Calu3 (cell line): ENCODE measurements at regions of chr17 and their contacts with region 1.

Region 1: GRCh38 chr17:42843358-42843934 is 934 bp upstream of the AOC2 start:
- DNase-seq: peak; percentile 61
- H3K4me3 Mint-ChIP-seq: no peak overlapping the region
- H3K27ac Mint-ChIP-seq: peak overlapping the region; percentile 15
- H3K4me1 Mint-ChIP-seq: peaks cover 8% of the 10 kb centered on the region
- H3K27me3 Mint-ChIP-seq: no peaks in the 10 kb centered on the region
- CTCF ChIP-seq: peak; percentile 78

Region 2: DNA sequence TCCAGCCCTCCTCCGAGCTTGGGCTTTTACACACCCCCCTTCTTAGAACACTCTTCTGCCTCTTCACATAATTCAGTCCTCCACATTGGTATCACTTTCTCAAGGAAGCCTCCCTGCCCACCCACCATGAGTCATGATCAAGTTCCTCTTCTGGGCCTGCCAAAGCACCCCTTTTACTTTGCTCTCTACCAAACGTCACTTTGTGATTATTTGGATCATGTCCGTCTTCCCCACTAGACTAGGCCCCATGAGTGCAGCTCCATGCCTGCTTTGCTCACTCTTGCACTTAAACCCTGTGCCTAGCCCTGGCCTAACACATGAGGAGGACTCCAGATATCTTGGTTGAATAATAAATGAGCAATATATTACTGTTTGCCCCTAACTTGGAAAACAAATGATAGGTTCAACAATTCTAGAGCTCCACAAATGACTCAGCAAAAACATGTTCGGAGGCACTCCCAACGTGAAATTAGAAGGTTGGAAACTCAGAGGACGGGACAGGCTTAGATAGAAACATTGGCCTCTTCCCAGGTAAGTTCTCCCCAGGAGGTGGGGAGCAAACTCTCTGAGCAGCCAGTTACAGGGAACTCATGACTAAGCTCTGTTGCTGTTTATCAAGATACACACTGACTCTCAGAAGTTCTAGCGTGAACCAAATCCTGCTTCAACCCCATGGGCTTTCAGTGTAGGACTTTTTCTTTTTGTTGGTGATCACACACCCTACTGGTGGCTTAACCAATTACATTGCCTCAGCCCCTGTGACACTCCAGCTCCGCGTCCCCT is 85.5 kb after region 1 on chr17:
- CTCF ChIA-PET with region 1: interaction called, 22 read pairs
- intact Hi-C with region 1: loop called (anchors 2 kb)
- DNase-seq: peak; percentile 62
- H3K4me3 Mint-ChIP-seq: no peak overlapping the region
- H3K27ac Mint-ChIP-seq: peak overlapping the region; percentile 24
- H3K4me1 Mint-ChIP-seq: peaks cover 10% of the 10 kb centered on the region
- H3K27me3 Mint-ChIP-seq: peaks cover 10% of the 10 kb centered on the region
- CTCF ChIP-seq: peak; percentile 72

Region 3: DNA sequence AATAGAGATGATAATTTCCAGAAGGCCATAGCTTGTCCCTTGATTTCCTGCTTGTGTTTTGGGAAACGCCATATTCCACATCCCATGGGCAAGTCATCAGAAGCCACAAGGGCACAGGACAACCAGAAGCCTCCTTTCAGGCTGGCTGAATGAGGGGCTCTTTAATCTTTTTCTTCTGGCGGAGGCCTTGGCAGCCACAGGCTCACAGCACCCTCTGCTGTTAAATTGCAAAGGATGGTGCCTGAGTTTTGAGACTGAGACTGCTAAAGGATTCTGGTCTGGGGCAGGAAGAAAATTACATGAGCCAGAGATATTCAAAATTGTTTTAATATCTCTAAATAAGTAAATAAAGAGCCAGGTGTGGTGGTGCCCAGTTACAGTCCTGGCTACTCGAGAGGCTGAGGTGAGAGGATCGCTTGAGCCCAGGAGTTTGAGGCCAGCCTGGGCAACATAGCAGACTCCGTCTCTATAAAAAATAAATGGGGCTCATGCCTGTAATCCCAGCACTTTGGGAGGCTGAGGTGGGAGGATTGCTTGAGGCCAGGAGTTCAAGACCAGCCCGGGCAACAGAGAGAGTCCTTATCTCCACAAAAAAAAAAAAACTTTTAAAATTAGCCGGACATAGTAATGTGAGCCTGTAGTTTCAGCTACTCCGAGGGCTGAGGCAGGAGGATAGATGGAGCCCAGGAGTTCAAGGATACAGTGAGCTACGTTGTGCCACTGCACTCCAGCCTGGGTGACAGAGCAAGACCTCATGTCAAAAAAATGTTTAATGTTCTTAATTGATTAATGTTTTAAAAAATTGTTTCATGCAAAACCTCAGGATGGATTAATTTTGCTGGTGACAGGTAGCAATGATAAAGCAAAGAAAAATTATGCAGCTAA is 94.5 kb after region 1 on chr17:
- CTCF ChIA-PET with region 1: interaction called, 5 read pairs
- intact Hi-C with region 1: loop called (anchors 1 kb)
- DNase-seq: peak; percentile 69
- H3K4me3 Mint-ChIP-seq: no peak overlapping the region
- H3K27ac Mint-ChIP-seq: no peak overlapping the region
- H3K4me1 Mint-ChIP-seq: no peaks in the 10 kb centered on the region
- H3K27me3 Mint-ChIP-seq: peaks cover 45% of the 10 kb centered on the region
- CTCF ChIP-seq: peak; percentile 80

Region 4: DNA sequence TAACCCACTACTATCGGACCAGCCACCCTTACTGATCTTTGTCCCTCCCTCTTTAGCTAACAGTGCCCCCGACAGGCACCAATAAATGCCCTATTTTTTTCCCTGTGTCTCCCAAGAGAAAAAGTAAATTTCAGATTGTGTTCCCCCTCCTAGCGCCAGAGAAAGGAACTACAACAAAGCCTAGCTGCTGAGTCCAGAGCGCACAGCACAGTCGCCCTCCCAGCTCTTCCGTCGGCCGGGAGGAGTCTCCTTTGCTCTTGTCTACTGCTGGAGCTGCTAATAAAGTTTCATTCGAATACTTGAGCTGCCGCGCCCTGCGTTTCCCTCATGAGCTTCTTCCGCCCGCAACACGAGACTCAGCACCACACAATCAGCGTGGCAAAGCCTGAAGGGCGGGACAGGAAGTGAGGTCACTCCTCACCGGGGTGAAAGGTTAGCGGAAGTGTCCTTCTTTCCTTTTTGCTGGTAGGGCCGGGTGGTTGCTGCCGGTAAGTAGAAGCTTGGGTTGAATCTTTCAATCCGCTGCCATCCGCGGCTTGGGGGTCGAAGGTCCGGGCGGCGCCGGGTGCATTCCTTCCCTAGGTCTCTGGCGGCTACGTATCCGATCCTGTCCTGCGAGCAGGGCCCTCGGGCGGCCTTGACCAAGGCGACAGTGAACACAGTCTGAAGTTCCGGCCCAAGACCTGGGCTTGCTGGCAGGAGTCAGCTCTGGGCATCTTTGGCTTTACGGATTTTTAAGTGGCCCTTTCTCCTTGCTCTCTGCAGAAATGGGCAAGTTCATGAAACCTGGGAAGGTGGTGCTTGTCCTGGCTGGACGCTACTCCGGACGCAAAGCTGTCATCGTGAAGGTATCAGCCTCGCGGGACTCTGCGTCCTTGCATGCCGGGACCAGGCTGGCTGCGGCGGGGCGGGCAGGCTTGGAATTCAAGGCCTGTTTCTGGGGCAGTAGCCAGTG is 154.8 kb after region 1 on chr17 and contains the start of gene RPL27:
- CTCF ChIA-PET with region 1: interaction called, 10 read pairs
- intact Hi-C with region 1: no loop called
- DNase-seq: peak; percentile 99
- H3K4me3 Mint-ChIP-seq: peak within 1 kb of the TSS; percentile 99
- H3K27ac Mint-ChIP-seq: peak within 1 kb of the TSS; percentile 100
- H3K4me1 Mint-ChIP-seq: peaks cover 19% of the 10 kb centered on the region
- H3K27me3 Mint-ChIP-seq: no peaks in the 10 kb centered on the region
- CTCF ChIP-seq: peak; percentile 96
- total RNA-seq, gene RPL27: 1,193 and 1,292 TPM in 2 replicates